B cell (primary cell): ENCODE measurements at regions of chr14 and their contacts with region 1.

Region 1: DNA sequence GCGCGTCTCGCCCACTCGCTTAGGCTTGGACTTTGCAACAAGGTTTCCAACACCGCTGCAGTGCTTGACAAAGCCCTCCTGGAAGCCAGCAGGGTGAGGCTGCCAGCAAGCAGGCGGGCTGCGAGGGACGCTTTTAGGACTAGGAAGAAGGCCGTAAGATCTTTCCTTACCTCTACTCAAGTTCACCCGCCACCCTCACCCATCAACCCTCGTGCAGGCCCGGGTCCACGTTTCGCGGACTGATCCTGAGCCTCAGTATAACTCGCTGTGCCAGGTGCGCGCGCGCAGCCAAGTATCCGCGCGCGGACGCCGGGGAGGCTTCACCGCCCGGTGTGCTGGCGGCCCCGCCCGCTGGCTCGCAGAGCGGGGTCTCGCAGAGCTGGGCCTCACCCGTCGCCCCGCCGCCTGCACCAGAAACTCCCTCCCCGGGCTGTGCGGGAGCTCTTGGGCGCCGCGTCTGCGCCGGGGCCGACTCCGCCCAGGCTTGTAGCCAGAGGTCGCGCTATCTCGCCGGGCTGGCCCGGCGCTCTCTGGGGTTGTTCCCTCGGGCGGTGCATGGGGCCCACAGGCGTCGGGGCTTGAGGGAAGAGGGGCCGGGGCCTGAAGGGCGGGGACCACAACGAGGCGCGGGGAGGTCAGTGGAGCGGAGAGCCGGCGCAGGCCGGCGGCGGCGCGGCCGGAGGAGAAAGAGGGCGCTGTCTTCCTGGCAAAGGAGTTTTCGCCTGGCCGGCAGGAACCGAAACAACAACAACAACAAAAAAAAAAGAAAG is 7.6 kb upstream of the SIX1 start:
- DNase-seq: peak; percentile 82
- ATAC-seq: peak; percentile 87
- H3K4me3 ChIP-seq: peak overlapping the region; percentile 50 to 71 (median 64)
- H3K4me3 Mint-ChIP-seq: peak overlapping the region; percentile 84
- H3K27ac ChIP-seq: no peak overlapping the region
- H3K27ac Mint-ChIP-seq: peak overlapping the region; percentile 80
- H3K4me1 ChIP-seq: peaks cover 37 to 39% of the 10 kb centered on the region in 2 donors
- H3K4me1 Mint-ChIP-seq: peaks cover 36% of the 10 kb centered on the region
- H3K27me3 ChIP-seq: peaks cover 3 to 85% (median 70%) of the 10 kb centered on the region in 4 experiments
- H3K27me3 Mint-ChIP-seq: peaks cover 73% of the 10 kb centered on the region
- CTCF ChIP-seq: peak; percentile 30

Region 2: GRCh38 chr14:60537663-60538062 is 119.2 kb before region 1 on chr14:
- CTCF ChIA-PET with region 1: no interaction called
- POLR2A ChIA-PET with region 1: no interaction called
- intact Hi-C with region 1: no loop called
- DNase-seq: no peak
- ATAC-seq: no peak
- H3K4me3 ChIP-seq: no peak overlapping the region
- H3K4me3 Mint-ChIP-seq: no peak overlapping the region
- H3K27ac ChIP-seq: no peak overlapping the region
- H3K27ac Mint-ChIP-seq: no peak overlapping the region
- H3K4me1 ChIP-seq: no peaks in the 10 kb centered on the region
- H3K4me1 Mint-ChIP-seq: no peaks in the 10 kb centered on the region
- H3K27me3 ChIP-seq: no peaks in the 10 kb centered on the region
- H3K27me3 Mint-ChIP-seq: peaks cover 24% of the 10 kb centered on the region
- CTCF ChIP-seq: no peak

Region 3: GRCh38 chr14:60616461-60616959 is 40.4 kb before region 1 on chr14:
- CTCF ChIA-PET with region 1: no interaction called
- POLR2A ChIA-PET with region 1: no interaction called
- intact Hi-C with region 1: no loop called
- DNase-seq: no peak
- ATAC-seq: no peak
- H3K4me3 ChIP-seq: no peak overlapping the region
- H3K4me3 Mint-ChIP-seq: no peak overlapping the region
- H3K27ac ChIP-seq: no peak overlapping the region
- H3K27ac Mint-ChIP-seq: no peak overlapping the region
- H3K4me1 ChIP-seq: peaks cover 0 to 3% of the 10 kb centered on the region in 2 donors
- H3K4me1 Mint-ChIP-seq: peaks cover 12% of the 10 kb centered on the region
- H3K27me3 ChIP-seq: no peaks in the 10 kb centered on the region
- H3K27me3 Mint-ChIP-seq: peaks cover 14% of the 10 kb centered on the region
- CTCF ChIP-seq: no peak

Region 4: GRCh38 chr14:60670989-60671388 is 14.1 kb after region 1 on chr14:
- CTCF ChIA-PET with region 1: no interaction called
- POLR2A ChIA-PET with region 1: no interaction called
- intact Hi-C with region 1: no loop called
- DNase-seq: no peak
- ATAC-seq: no peak
- H3K4me3 ChIP-seq: no peak overlapping the region
- H3K4me3 Mint-ChIP-seq: no peak overlapping the region
- H3K27ac ChIP-seq: no peak overlapping the region
- H3K27ac Mint-ChIP-seq: no peak overlapping the region
- H3K4me1 ChIP-seq: no peaks in the 10 kb centered on the region
- H3K4me1 Mint-ChIP-seq: no peaks in the 10 kb centered on the region
- H3K27me3 ChIP-seq: no peaks in the 10 kb centered on the region
- H3K27me3 Mint-ChIP-seq: peaks cover 6% of the 10 kb centered on the region
- CTCF ChIP-seq: no peak

Region 5: DNA sequence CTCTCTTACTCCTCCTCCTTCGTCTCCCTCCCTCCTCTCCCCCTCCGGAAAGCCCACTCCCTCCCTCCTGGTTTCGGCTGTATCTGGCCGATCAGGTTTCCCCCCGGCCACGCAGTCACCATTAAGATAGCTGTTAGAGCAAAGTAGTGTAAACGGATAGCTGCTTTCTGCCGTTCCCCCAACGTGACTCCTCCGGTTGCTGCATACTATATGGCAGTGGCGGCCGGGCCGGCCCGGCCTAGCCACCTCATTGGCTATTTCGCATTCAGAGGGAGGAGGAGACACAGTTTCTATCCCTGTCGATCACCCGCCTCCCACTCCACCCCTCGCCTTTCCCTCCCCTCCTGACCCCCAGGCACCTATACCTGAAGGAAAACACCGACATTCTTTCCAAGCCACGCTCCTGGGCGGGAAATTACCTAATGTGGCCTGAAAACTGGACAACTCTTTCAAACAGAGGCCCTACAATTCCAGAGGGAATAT is 67.3 kb after region 1 on chr14 and contains the start of gene SIX4:
- CTCF ChIA-PET with region 1: no interaction called
- POLR2A ChIA-PET with region 1: no interaction called
- intact Hi-C with region 1: loop called (anchors 5 kb)
- DNase-seq: peak; percentile 53
- ATAC-seq: peak; percentile 21
- H3K4me3 ChIP-seq: peak within 1 kb of the TSS; percentile 46 to 87 (median 56)
- H3K4me3 Mint-ChIP-seq: peak within 1 kb of the TSS; percentile 94
- H3K27ac ChIP-seq: no peak within 1 kb of the TSS
- H3K27ac Mint-ChIP-seq: no peak within 1 kb of the TSS
- H3K4me1 ChIP-seq: peaks cover 32 to 35% of the 10 kb centered on the region in 2 donors
- H3K4me1 Mint-ChIP-seq: peaks cover 22% of the 10 kb centered on the region
- H3K27me3 ChIP-seq: peaks cover 0 to 79% (median 65%) of the 10 kb centered on the region in 4 experiments
- H3K27me3 Mint-ChIP-seq: peaks cover 75% of the 10 kb centered on the region
- CTCF ChIP-seq: no peak
- total RNA-seq, gene SIX4: not detected in 2 replicates